Panc1 (cell line): ENCODE measurements at regions of chr15 and their contacts with region 1.

Region 1: GRCh38 chr15:63891079-63891767 is 57.5 kb upstream of the HERC1 start:
- DNase-seq: peak; percentile 74
- ATAC-seq: peak; percentile 98
- H3K4me3 ChIP-seq: no peak overlapping the region
- H3K27ac ChIP-seq: no peak overlapping the region; the same call in 1 of the 2 replicates
- H3K4me1 ChIP-seq: peaks cover 3% of the 10 kb centered on the region; the same call in 1 of the 2 replicates
- H3K27me3 ChIP-seq: no peaks in the 10 kb centered on the region
- CTCF ChIP-seq: peak; percentile 95

Region 2: GRCh38 chr15:63256433-63257274 is 634.6 kb before region 1 on chr15:
- CTCF ChIA-PET with region 1: no interaction called
- POLR2A ChIA-PET with region 1: no interaction called
- in situ Hi-C with region 1: no loop called
- intact Hi-C with region 1: no loop called
- DNase-seq: no peak
- ATAC-seq: no peak
- H3K4me3 ChIP-seq: no peak overlapping the region
- H3K27ac ChIP-seq: no peak overlapping the region
- H3K4me1 ChIP-seq: peaks cover 5% of the 10 kb centered on the region; the same call in 1 of the 2 replicates
- H3K27me3 ChIP-seq: no peaks in the 10 kb centered on the region
- CTCF ChIP-seq: no peak

Region 3: DNA sequence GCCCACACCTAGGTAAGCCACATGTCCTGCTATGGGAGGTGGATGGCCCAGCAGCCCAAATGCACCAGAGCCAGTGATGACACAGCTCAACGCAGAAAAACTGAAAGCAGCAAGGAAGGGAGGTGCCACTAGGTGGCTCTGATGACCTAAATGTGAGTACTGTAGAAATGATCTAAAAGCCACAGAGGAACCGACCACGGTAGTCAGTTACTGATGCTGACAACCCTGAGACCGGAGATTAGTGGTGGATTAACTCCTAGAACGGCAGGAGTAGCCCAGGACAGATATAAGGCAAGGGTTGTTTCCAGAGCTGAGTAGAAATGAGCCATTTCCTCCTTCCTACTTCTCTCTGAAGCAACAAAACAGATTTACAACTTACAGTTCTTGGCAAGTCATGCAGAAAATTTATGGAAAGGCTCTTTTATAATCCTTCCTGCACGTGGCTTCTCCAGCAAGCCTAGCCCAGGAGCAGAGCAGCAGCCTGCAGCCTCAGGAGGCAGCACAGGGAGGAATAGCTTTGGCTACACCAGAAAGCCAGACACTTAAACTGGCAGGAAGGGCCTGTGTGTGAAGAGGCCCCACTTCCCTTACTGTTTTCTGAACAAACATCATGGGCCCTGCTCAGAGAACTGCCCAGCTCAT is 280.9 kb before region 1 on chr15:
- CTCF ChIA-PET with region 1: no interaction called
- POLR2A ChIA-PET with region 1: no interaction called
- in situ Hi-C with region 1: no loop called
- intact Hi-C with region 1: loop called (anchors 2 kb)
- DNase-seq: peak; percentile 64
- ATAC-seq: peak; percentile 95
- H3K4me3 ChIP-seq: no peak overlapping the region
- H3K27ac ChIP-seq: peak overlapping the region; percentile 25; the same call in 1 of the 2 replicates
- H3K4me1 ChIP-seq: peaks cover 7% of the 10 kb centered on the region
- H3K27me3 ChIP-seq: no peaks in the 10 kb centered on the region
- CTCF ChIP-seq: peak; percentile 90

Region 4: GRCh38 chr15:63752075-63752684 is 139.0 kb before region 1 on chr15:
- CTCF ChIA-PET with region 1: interaction called, 7 read pairs
- POLR2A ChIA-PET with region 1: no interaction called
- in situ Hi-C with region 1: no loop called
- intact Hi-C with region 1: loop called (anchors 1 kb)
- DNase-seq: peak; percentile 51
- ATAC-seq: peak; percentile 84
- H3K4me3 ChIP-seq: no peak overlapping the region
- H3K27ac ChIP-seq: no peak overlapping the region
- H3K4me1 ChIP-seq: no peaks in the 10 kb centered on the region
- H3K27me3 ChIP-seq: no peaks in the 10 kb centered on the region
- CTCF ChIP-seq: peak; percentile 75; the same call in 1 of the 2 replicates

Region 5: DNA sequence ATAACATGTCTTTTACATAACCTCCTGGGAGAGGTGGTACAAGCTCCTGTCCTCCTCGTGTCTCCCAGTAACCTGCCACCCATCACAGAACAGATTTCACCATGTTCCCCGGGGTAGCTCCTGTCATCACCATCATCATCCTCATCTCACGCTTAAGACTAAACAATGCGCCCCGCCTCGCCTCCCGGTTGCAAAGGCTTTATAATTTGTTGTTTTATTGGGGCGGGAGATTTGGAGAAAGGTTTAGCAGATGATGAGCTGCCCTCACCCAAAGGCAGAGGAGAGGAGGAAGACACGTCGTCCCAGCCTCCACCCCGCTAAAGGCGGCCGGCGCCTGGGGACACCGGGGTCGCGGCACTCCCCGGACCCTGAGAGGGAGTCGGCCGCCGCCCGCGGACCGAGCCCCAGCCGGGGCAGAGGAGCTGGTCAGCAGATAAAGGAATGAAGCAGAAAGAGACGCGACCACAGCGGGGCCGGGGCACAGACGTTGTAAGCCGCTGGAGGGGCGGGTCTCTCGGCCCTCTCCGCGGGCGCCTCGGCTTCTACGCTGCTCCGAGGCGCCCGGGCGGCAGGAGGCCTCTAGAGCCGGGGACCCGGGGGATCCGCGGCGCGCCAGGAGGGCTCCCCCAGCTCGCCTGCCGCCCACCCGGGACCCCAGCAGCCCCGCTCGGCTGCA is 58.1 kb before region 1 on chr15:
- CTCF ChIA-PET with region 1: no interaction called
- POLR2A ChIA-PET with region 1: no interaction called
- in situ Hi-C with region 1: no loop called
- intact Hi-C with region 1: loop called (anchors 2 kb)
- DNase-seq: no peak
- ATAC-seq: peak; percentile 82
- H3K4me3 ChIP-seq: peak overlapping the region; percentile 79 to 83
- H3K27ac ChIP-seq: peak overlapping the region; percentile 75
- H3K4me1 ChIP-seq: no peaks in the 10 kb centered on the region; the same call in 1 of the 2 replicates
- H3K27me3 ChIP-seq: no peaks in the 10 kb centered on the region
- CTCF ChIP-seq: no peak

Region 6: DNA sequence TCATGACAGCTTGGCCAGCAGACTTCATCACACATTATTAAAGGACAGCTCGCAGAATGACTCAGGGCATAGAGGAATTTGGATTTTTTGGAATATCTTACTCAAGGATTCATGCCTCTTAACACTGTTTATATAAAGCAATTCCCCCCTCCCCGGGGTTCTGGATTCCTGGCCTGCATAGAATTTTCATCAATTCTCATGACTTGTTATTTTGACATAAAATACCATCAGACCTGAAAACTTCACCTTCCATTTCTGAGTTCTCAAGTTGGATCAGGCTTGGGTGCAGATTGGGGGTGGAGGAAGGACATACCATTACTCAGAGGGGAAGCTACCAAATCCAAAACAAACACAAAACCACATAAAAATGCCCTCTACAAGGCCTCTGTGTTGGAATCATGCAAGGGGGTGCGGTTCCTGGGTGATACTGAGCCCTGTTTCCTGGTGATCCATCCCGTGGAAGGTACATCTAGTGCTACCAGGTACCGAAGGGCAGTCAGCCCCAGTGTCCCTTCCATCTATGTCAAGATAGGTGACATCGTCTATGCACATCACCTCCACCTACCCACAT is 59.8 kb after region 1 on chr15:
- CTCF ChIA-PET with region 1: no interaction called
- POLR2A ChIA-PET with region 1: no interaction called
- in situ Hi-C with region 1: no loop called
- intact Hi-C with region 1: no loop called
- DNase-seq: no peak
- ATAC-seq: no peak
- H3K4me3 ChIP-seq: no peak overlapping the region
- H3K27ac ChIP-seq: no peak overlapping the region
- H3K4me1 ChIP-seq: no peaks in the 10 kb centered on the region
- H3K27me3 ChIP-seq: no peaks in the 10 kb centered on the region
- CTCF ChIP-seq: no peak